HCT116 (cell line): ENCODE measurements at regions of chr5 and their contacts with region 1.

Region 1: DNA sequence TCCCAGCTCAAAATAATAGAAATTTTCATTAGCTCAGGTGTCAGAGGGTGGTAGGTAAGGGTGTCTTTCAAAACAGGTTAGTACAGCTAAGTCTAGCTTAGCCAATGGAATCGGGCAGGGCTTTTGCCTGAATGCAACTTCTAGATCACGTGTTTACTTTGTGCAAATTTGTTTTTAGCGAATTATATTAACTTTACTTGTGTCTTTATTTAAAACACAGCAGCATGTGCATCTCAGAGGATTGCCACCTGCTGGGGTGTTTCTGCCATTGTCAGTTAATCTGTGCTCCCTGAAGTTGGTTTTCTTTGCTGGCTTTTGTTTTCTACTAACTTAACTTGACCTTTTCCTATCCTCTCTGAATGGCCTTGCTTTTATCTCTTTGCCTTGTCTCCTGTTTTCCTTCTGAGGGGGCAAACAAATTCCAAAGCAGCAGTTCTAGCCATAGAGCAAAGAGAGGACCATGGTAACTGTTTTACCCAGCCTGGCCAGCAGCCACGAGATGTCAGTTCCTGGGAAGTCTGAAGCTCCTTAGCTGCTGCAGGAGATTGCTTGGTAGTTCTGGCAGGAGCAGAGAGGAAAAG is 67.6 kb downstream of the ARHGEF28 start:
- DNase-seq: no peak
- ATAC-seq: peak; percentile 53; the same call in 1 of the 2 replicates
- H3K4me3 ChIP-seq: no peak overlapping the region
- H3K27ac ChIP-seq: no peak overlapping the region
- H3K4me1 ChIP-seq: peaks cover 9 to 10% of the 10 kb centered on the region in 2 experiments; a peak in 3 of 4 replicates
- H3K27me3 ChIP-seq: no peaks in the 10 kb centered on the region
- CTCF ChIP-seq: peak; percentile 29 to 65 (median 52); a peak in 5 of 6 replicates
- POLR2A ChIP-seq: no peak
- RAD21 ChIP-seq: peak; percentile 39

Region 2: DNA sequence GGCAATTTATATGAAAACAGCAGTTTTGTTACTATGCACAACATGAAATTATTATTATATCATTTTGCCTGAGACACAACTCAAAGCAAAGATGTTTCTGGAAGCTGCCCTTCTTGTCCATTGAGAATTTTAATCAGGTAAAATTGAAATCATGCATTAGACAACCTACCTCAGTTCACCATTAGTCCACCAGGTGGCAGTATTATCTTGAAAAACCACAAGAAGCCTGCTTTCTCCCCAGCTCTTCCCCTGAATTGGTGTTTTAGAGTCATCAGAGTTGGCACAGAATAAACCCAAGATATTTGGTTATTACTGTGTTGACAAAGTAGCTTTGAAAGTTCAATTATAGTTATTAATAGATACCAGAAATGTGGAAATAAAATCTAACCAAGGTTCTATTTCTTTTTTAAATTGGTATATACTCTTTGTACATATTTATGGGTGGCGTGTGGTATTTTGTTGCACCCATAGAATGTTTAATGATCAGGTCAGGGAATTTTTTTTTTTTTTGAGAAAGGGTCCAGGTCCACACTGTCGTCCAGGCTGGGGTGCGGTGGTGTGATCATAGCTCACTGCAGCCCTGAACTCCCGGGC is 102.4 kb before region 1 on chr5:
- CTCF ChIA-PET with region 1: interaction called, 31 read pairs
- POLR2A ChIA-PET with region 1: no interaction called
- RAD21 ChIA-PET with region 1: interaction called in 1 of 2 experiments, 6 read pairs
- intact Hi-C with region 1: loop called (anchors 1 kb)
- DNase-seq: peak; percentile 83
- ATAC-seq: peak; percentile 84
- H3K4me3 ChIP-seq: no peak overlapping the region
- H3K27ac ChIP-seq: no peak overlapping the region
- H3K4me1 ChIP-seq: no peaks in the 10 kb centered on the region
- H3K27me3 ChIP-seq: no peaks in the 10 kb centered on the region
- CTCF ChIP-seq: peak; percentile 59 to 85 (median 80); a peak in 5 of 6 replicates
- POLR2A ChIP-seq: no peak
- RAD21 ChIP-seq: peak; percentile 92